ENCODE measurements at regions of chr19 and their contacts with region 1.

Region 1: GRCh38 chr19:4633140-4633967 is 6.0 kb upstream of the TNFAIP8L1 start:
- DNase-seq: peak; percentile 65
- H3K4me3 Mint-ChIP-seq: no peak overlapping the region
- H3K27ac Mint-ChIP-seq: no peak overlapping the region
- H3K4me1 Mint-ChIP-seq: peaks cover 11% of the 10 kb centered on the region
- H3K27me3 Mint-ChIP-seq: no peaks in the 10 kb centered on the region

Region 2: DNA sequence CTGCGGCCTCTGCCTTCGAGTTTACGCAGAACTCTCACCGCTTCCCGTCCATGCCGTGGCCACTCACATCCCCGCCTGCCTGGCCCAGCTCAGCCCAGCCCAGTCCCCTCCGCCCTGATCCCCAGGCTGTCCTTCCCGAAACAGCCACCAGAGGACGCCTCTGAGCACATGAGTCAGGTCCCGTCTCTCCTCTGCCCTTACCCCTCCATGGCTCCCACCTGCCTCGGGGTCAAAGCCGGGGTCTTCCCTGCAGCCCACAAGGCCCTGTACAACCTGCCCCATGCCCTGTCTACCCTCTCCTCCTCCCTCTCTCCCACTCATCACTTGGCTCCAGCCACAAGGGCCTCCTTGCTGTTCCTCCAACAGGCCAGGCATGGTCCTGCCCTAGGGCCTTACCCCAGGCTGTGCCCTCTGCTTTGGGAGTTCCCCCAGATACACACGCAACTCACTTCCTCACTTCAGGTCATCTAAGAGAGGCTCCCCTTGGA is 65.7 kb before region 1 on chr19:
- CTCF ChIA-PET with region 1: interaction called, 66 read pairs
- POLR2A ChIA-PET with region 1: no interaction called
- intact Hi-C with region 1: no loop called
- DNase-seq: peak; percentile 80
- H3K4me3 Mint-ChIP-seq: no peak overlapping the region
- H3K27ac Mint-ChIP-seq: no peak overlapping the region
- H3K4me1 Mint-ChIP-seq: no peaks in the 10 kb centered on the region
- H3K27me3 Mint-ChIP-seq: peaks cover 9% of the 10 kb centered on the region

Region 3: GRCh38 chr19:4576016-4576933 is 57.1 kb before region 1 on chr19:
- CTCF ChIA-PET with region 1: interaction called, 66 read pairs
- POLR2A ChIA-PET with region 1: no interaction called
- intact Hi-C with region 1: loop called (anchors 2 kb)
- DNase-seq: peak; percentile 79
- H3K4me3 Mint-ChIP-seq: no peak overlapping the region
- H3K27ac Mint-ChIP-seq: no peak overlapping the region
- H3K4me1 Mint-ChIP-seq: no peaks in the 10 kb centered on the region
- H3K27me3 Mint-ChIP-seq: peaks cover 39% of the 10 kb centered on the region

Region 4: DNA sequence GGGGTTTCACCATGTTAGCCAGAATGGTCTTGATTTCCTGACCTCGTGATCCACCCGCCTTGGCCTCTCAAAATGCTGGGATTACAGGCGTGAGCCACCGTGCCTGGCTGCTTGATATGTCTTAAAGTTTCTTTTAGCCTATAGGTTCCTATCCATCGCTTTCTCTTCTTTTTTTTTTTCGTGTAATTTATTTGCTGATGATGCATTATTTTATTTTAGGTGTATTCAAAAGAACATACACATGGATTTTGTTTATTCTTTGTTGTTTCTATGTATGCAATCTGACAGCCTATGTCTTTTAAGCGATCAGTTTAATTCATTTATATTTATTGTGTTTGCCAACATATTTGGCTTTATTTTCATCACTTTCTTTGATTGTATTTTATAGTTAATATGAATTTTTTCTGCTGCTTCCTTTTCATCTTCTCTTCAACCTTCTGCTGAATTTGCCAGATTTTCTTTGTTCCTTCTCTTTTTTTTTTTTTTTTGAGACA is 20.0 kb before region 1 on chr19:
- CTCF ChIA-PET with region 1: no interaction called
- POLR2A ChIA-PET with region 1: no interaction called
- intact Hi-C with region 1: no loop called
- DNase-seq: no peak
- H3K4me3 Mint-ChIP-seq: no peak overlapping the region
- H3K27ac Mint-ChIP-seq: no peak overlapping the region
- H3K4me1 Mint-ChIP-seq: no peaks in the 10 kb centered on the region
- H3K27me3 Mint-ChIP-seq: peaks cover 10% of the 10 kb centered on the region

Region 5: GRCh38 chr19:4851551-4852290 is 218.4 kb after region 1 on chr19:
- CTCF ChIA-PET with region 1: no interaction called
- POLR2A ChIA-PET with region 1: no interaction called
- intact Hi-C with region 1: no loop called
- DNase-seq: peak; percentile 81
- H3K4me3 Mint-ChIP-seq: no peak overlapping the region
- H3K27ac Mint-ChIP-seq: peak overlapping the region; percentile 38
- H3K4me1 Mint-ChIP-seq: peaks cover 2% of the 10 kb centered on the region
- H3K27me3 Mint-ChIP-seq: no peaks in the 10 kb centered on the region